ENCODE measurements at regions of chr3 and their contacts with region 1.

Region 1: DNA sequence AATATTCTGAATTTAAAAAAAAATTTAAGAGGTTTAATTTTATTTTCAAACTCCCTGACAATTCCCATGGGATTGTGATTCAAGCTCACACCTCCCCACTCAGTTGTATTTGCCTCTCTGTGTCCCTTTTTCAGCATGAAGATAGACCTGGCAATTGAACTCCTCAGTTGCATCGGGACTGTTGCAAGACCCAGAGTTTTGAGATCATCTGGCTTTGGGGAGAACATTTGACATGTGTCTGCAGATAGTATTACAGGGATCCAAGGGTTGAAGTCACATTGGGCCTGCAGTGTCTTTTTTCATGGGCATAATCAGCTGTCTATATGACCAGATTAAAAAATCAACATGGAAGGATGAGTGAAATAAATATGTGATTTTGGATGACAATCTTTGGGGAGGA is 91.1 kb upstream of the EOMES start:
- DNase-seq: no peak
- H3K4me3 ChIP-seq: no peak overlapping the region
- H3K27ac ChIP-seq: no peak overlapping the region
- H3K4me1 ChIP-seq: no peaks in the 10 kb centered on the region
- H3K27me3 ChIP-seq: no peaks in the 10 kb centered on the region
- CTCF ChIP-seq: no peak

Region 2: DNA sequence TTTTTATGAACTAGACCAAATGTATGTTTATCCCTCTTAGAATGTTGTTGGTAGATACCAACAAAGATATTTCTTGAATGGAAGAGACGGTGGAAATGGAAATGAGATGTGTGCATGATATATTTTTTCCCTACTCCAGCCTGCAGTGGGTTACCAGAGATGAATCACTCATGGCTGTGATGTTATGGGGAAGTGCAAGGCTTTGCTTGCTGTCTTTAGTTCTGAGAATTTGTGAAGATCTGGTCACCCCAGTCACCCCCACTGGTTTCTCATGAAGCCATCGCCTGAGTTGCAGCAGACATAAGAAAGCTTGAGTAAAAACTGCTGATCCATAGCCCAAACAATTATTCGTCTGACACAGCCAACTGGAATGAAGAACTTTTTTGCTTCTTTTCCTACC is 13.0 kb before region 1 on chr3:
- intact Hi-C with region 1: loop called (anchors 1 kb)
- DNase-seq: no peak
- H3K4me3 ChIP-seq: no peak overlapping the region
- H3K27ac ChIP-seq: no peak overlapping the region
- H3K4me1 ChIP-seq: no peaks in the 10 kb centered on the region
- H3K27me3 ChIP-seq: no peaks in the 10 kb centered on the region
- CTCF ChIP-seq: no peak

Measured in tibial artery (tissue), 4 donors.